ENCODE measurements at regions of chr16 and their contacts with region 1.

Region 1: GRCh38 chr16:2223375-2224182 is at the start of gene E4F1:
- DNase-seq: peak; percentile 99
- H3K4me3 Mint-ChIP-seq: peak within 1 kb of the TSS; percentile 87
- H3K27ac Mint-ChIP-seq: peak within 1 kb of the TSS; percentile 77
- H3K4me1 Mint-ChIP-seq: peaks cover 9% of the 10 kb centered on the region
- H3K27me3 Mint-ChIP-seq: no peaks in the 10 kb centered on the region
- total RNA-seq, gene E4F1: 35.6 and 37.4 TPM in 2 replicates

Region 2: DNA sequence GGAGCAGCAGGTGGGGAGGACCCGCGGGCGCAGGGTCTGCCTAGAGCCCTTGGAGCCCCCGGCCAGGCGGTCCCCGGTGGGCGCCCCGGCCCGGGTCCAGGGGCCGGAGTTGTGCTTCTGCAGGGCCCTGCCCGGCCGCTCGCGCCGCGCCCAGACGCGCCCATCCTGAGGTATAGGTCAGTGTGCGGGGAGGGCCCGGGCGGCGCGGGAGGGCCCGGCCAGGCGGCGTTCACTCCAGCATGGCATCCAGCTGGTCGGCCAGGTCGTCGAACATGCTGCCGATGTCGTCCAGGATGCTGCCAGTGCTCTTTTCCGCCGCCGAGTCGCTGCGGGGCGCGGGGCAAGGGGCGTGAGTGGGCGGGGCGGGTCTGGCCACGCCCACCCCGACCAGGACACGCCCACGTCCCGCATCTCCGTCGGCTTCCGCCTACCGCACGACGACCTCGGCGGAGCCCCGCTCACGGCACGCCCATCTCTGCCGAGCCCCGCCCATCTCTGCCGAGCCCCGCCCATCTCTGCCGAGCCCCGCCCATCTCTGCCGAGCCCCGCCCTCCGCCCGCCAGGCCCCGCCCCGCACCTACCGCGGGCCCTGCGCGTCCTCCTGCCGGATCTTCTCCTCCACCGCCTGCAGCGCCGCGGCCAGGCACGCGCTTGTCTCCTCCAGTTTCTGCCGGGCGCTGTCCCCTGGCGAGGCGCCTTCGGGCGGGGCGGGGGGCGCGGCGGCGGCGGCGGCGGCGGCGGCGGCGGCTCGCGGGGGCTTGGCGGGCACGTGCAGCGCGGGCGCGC is 45.1 kb before region 1 on chr16:
- intact Hi-C with region 1: loop called (anchors 1 kb)
- DNase-seq: no peak
- H3K4me3 Mint-ChIP-seq: no peak overlapping the region
- H3K27ac Mint-ChIP-seq: no peak overlapping the region
- H3K4me1 Mint-ChIP-seq: no peaks in the 10 kb centered on the region
- H3K27me3 Mint-ChIP-seq: no peaks in the 10 kb centered on the region

Region 3: DNA sequence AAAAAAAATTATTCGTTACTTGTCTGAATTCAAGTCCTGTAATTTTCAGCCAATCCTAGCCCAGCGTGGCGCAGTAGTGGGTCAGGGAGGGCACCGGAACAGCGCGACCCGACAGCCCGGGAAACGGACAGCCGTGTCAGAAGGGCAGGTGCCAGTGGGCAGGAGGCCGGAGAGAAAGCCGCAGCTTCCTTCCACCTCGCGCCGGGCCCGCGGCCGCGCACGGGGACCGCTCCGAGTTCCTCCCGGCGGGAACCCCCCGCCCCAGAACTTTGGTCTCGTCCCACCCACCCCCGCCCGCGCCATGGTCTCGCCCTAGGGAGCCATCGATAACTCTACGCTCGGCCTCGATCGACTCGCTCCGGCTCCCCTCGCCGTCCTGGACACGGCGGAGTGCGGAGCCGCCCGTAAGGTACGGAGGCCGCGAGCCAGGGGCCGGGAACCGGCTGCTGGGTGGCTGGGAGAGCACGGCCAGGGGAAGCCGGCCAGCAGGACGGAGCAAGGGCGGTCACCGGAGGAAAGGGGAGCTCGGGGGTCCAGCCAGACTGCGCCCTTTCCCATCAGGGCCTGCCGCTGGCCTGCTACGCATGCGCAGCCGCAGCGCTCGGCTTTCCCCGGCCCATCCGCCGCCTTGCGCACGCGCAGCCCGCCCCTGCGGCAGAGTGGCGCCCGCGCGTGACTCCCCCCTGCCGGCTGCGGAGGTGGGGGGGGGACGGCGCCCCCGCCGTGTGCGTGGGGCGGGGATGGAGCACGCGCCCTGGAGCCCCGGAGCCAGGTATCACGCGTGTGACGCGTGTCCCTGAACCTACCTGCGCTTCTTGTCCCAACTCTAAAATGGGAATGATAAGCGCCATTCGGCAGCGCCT is 18.2 kb before region 1 on chr16 and contains the start of gene MLST8:
- intact Hi-C with region 1: loop called (anchors 1 kb)
- DNase-seq: peak; percentile 90
- H3K4me3 Mint-ChIP-seq: peak within 1 kb of the TSS; percentile 86
- H3K27ac Mint-ChIP-seq: peak within 1 kb of the TSS; percentile 68
- H3K4me1 Mint-ChIP-seq: peaks cover 22% of the 10 kb centered on the region
- H3K27me3 Mint-ChIP-seq: peaks cover 13% of the 10 kb centered on the region
- total RNA-seq, gene MLST8: 57.0 and 61.9 TPM in 2 replicates

Region 4: DNA sequence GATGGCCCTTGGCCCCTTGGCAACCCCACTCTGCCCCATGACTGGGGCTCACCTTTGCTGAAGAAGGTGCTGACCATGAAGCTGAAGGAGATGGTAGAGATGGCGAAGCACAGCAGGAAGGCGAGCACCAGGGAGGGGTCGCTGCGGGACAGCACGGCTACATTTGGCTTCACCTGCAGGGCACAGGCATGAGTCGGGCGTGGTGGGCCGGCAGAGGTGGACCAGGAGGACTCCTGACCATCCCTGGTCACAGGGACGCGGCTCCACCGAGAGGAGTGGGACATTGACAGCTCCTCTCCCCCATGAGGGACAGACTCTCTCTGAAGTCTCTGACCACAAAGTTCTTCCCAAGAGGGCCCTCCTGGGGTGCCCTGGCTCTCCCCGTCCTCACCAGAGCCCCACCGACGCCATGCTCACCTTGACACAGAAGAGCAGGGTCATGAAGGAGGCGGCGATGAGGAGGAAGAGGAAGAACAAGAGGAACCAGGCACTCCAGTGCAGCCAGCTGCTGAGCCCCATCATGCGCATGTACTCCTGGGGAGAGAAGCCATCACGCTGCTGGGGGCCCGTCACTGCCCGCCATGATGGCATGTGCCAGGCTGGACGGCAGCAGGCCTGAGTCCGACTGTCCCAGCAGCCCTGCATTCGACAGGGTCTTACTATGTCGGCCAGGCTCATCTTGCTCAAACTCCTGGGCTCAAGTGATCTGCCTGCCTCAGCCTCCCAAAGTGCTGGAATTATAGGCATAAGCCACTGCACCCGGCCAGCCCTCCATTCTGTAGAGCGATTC is 93.8 kb after region 1 on chr16:
- intact Hi-C with region 1: no loop called
- DNase-seq: no peak
- H3K4me3 Mint-ChIP-seq: no peak overlapping the region
- H3K27ac Mint-ChIP-seq: no peak overlapping the region
- H3K4me1 Mint-ChIP-seq: no peaks in the 10 kb centered on the region
- H3K27me3 Mint-ChIP-seq: no peaks in the 10 kb centered on the region